ENCODE measurements at regions of chr11 and their contacts with region 1.

Region 1: GRCh38 chr11:126211235-126212088 is at the starts of genes FAM118B and RPUSD4:
- DNase-seq: peak; percentile 96 to 100 (median 98)
- ATAC-seq: peak; percentile 97
- H3K4me3 ChIP-seq: peak within 1 kb of the TSS; percentile 99
- H3K4me3 Mint-ChIP-seq: peak within 1 kb of the TSS; percentile 100
- H3K27ac ChIP-seq: peak within 1 kb of the TSS; percentile 50 to 78
- H3K27ac Mint-ChIP-seq: peak within 1 kb of the TSS; percentile 93
- H3K4me1 ChIP-seq: peaks cover 21% of the 10 kb centered on the region
- H3K4me1 Mint-ChIP-seq: peaks cover 61% of the 10 kb centered on the region
- H3K27me3 ChIP-seq: no peaks in the 10 kb centered on the region
- H3K27me3 Mint-ChIP-seq: no peaks in the 10 kb centered on the region
- CTCF ChIP-seq: no peak
- total RNA-seq, gene FAM118B: 1.0 to 1.8 TPM
- total RNA-seq, gene RPUSD4: 33.1 to 37.6 TPM

Region 2: GRCh38 chr11:125568970-125569914 is 642.2 kb before region 1 on chr11 and contains the start of gene EI24:
- CTCF ChIA-PET with region 1: no interaction called
- POLR2A ChIA-PET with region 1: no interaction called
- intact Hi-C with region 1: loop called in 1 of 2 experiments (anchors 1 kb)
- DNase-seq: peak; percentile 76 to 95 (median 86)
- ATAC-seq: peak; percentile 94
- H3K4me3 ChIP-seq: peak within 1 kb of the TSS; percentile 80
- H3K4me3 Mint-ChIP-seq: peak within 1 kb of the TSS; percentile 95
- H3K27ac ChIP-seq: peak within 1 kb of the TSS; percentile 68 to 74
- H3K27ac Mint-ChIP-seq: peak within 1 kb of the TSS; percentile 84
- H3K4me1 ChIP-seq: peaks cover 18% of the 10 kb centered on the region
- H3K4me1 Mint-ChIP-seq: peaks cover 26% of the 10 kb centered on the region
- H3K27me3 ChIP-seq: no peaks in the 10 kb centered on the region
- H3K27me3 Mint-ChIP-seq: no peaks in the 10 kb centered on the region
- CTCF ChIP-seq: peak; percentile 76
- total RNA-seq, gene EI24: 21.0 to 22.8 TPM

Region 3: DNA sequence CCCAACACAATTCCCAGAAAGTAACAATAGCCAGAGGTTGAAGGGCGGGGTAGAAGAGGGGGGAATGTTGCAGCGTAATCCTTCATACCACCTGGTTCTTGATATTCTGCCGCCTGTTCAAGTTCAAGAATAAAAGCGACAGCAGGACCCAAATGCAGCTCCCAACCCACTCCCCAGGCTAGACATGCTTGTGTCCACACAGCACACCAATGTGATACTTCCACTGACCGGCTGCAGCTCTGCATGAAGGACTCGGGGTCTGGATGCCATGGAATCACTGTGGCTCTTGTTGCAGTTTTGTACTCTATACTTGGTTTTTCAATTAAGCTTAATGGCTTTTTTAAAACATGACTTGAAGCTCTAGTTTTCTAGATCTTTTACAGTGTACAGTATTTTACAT is 50.8 kb after region 1 on chr11:
- CTCF ChIA-PET with region 1: no interaction called
- POLR2A ChIA-PET with region 1: interaction called, 21 read pairs
- intact Hi-C with region 1: loop called (anchors 2 to 5 kb)
- DNase-seq: no peak
- ATAC-seq: no peak
- H3K4me3 ChIP-seq: no peak overlapping the region
- H3K4me3 Mint-ChIP-seq: no peak overlapping the region
- H3K27ac ChIP-seq: no peak overlapping the region
- H3K27ac Mint-ChIP-seq: no peak overlapping the region
- H3K4me1 ChIP-seq: peaks cover 6% of the 10 kb centered on the region
- H3K4me1 Mint-ChIP-seq: peaks cover 6% of the 10 kb centered on the region
- H3K27me3 ChIP-seq: no peaks in the 10 kb centered on the region
- H3K27me3 Mint-ChIP-seq: no peaks in the 10 kb centered on the region
- CTCF ChIP-seq: no peak

Region 4: DNA sequence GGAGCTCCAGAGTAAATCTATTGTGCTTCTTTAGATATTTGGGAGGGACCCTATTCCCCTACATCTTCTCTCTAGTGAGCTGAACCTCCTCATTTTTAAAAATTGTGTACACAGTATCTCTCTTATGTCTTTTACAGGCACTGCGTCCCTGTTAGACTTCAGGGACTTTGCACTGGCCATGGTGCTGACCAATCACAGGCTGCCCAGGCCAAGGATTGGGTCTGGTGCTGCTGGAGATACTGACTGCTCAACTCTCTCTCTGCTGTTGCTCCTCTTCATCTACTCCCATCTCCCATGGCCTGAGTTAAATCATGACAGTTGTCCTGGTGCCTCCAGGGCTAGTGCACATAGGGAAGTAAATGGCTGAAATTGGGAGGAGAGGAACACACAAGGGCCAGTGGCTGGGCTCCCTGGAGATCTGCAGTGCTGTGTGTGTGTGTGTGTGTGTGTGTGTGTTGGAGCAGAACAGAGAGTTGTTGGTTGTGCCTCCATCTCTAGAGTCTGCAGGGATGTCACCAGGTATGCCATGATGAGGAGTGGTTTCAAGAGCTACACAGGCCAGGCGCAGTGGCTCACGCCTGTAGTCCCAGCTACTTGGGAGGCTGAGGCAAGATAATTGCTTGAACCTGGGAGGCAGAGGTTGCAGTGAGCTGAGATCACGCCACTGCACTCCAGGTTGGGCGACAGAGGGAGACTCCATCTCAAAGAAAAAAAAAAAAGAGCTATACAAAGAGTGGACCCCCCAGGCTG is 299.3 kb after region 1 on chr11:
- CTCF ChIA-PET with region 1: no interaction called
- POLR2A ChIA-PET with region 1: no interaction called
- intact Hi-C with region 1: no loop called
- DNase-seq: no peak
- ATAC-seq: no peak
- H3K4me3 ChIP-seq: no peak overlapping the region
- H3K4me3 Mint-ChIP-seq: no peak overlapping the region
- H3K27ac ChIP-seq: no peak overlapping the region
- H3K27ac Mint-ChIP-seq: no peak overlapping the region
- H3K4me1 ChIP-seq: no peaks in the 10 kb centered on the region
- H3K4me1 Mint-ChIP-seq: no peaks in the 10 kb centered on the region
- H3K27me3 ChIP-seq: peaks cover 0 to 3% of the 10 kb centered on the region in 2 experiments
- H3K27me3 Mint-ChIP-seq: peaks cover 42% of the 10 kb centered on the region
- CTCF ChIP-seq: no peak